GM10248 (cell line): ENCODE measurements at regions of chr11 and their contacts with region 1.

Region 1: GRCh38 chr11:31351168-31351567 is 18.4 kb downstream of the DCDC1 start:
- DNase-seq: no peak
- CTCF ChIP-seq: no peak

Region 2: DNA sequence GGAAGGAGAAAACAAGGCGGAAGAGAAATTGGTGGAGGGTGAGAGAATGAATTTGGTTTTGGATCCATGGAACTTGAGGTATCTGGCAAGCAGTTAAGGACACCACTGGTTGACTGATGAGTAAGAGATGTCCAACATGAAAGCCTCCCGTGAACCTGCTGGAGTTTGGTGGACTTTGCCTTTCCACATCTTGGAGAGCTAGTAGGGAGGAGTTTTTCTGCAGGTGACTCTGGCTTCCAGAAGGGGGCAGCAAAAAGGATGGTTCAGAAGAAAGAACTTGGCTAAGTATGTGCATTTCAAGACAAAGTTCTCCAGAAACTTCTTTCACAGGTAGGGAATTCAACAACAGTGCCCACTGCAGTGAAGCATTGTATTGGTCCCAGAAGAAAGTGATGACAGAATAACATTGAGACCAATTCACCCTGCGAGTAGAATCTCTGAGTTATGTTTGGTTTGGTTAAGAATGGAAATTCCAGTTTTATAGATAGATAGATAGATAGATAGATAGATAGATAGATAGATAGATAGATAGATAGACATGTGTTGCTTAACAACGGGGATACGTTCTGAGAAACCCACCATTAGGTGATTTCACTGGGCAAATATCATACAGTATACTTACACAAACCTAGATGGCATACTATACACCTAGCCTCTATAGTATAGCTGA is 10.1 kb before region 1 on chr11:
- CTCF ChIA-PET with region 1: interaction called, 24 read pairs
- POLR2A ChIA-PET with region 1: no interaction called
- DNase-seq: peak; percentile 31
- CTCF ChIP-seq: peak; percentile 46